Naive thymus-derived CD4-positive, alpha-beta T cell (primary cell): ENCODE measurements at regions of chr3 and their contacts with region 1.

Region 1: GRCh38 chr3:148757238-148758215 is 59.8 kb downstream of the AGTR1 start:
- DNase-seq: no peak
- ATAC-seq: peak; percentile 76
- H3K4me3 ChIP-seq: no peak overlapping the region
- H3K4me3 Mint-ChIP-seq: no peak overlapping the region
- H3K27ac ChIP-seq: no peak overlapping the region
- H3K27ac Mint-ChIP-seq: no peak overlapping the region
- H3K4me1 ChIP-seq: no peaks in the 10 kb centered on the region
- H3K4me1 Mint-ChIP-seq: no peaks in the 10 kb centered on the region
- H3K27me3 ChIP-seq: no peaks in the 10 kb centered on the region
- H3K27me3 Mint-ChIP-seq: peaks cover 0 to 7% (median 0%) of the 10 kb centered on the region in 5 donors

Region 2: GRCh38 chr3:148333091-148333490 is 424.4 kb before region 1 on chr3:
- CTCF ChIA-PET with region 1: no interaction called
- POLR2A ChIA-PET with region 1: no interaction called
- intact Hi-C with region 1: no loop called
- DNase-seq: no peak
- ATAC-seq: no peak
- H3K4me3 ChIP-seq: no peak overlapping the region
- H3K4me3 Mint-ChIP-seq: no peak overlapping the region
- H3K27ac ChIP-seq: no peak overlapping the region
- H3K27ac Mint-ChIP-seq: no peak overlapping the region
- H3K4me1 ChIP-seq: no peaks in the 10 kb centered on the region
- H3K4me1 Mint-ChIP-seq: no peaks in the 10 kb centered on the region
- H3K27me3 ChIP-seq: no peaks in the 10 kb centered on the region
- H3K27me3 Mint-ChIP-seq: no peaks in the 10 kb centered on the region

Region 3: GRCh38 chr3:148778926-148779325 is 21.4 kb after region 1 on chr3:
- CTCF ChIA-PET with region 1: no interaction called
- POLR2A ChIA-PET with region 1: no interaction called
- intact Hi-C with region 1: loop called (anchors 1 kb)
- DNase-seq: no peak
- ATAC-seq: peak; percentile 45
- H3K4me3 ChIP-seq: no peak overlapping the region
- H3K4me3 Mint-ChIP-seq: no peak overlapping the region
- H3K27ac ChIP-seq: no peak overlapping the region
- H3K27ac Mint-ChIP-seq: no peak overlapping the region
- H3K4me1 ChIP-seq: no peaks in the 10 kb centered on the region
- H3K4me1 Mint-ChIP-seq: no peaks in the 10 kb centered on the region
- H3K27me3 ChIP-seq: no peaks in the 10 kb centered on the region
- H3K27me3 Mint-ChIP-seq: peaks cover 0 to 6% (median 0%) of the 10 kb centered on the region in 5 donors